Gastrocnemius medialis (tissue), 4 donors: ENCODE measurements at regions of chr10 and their contacts with region 1.

Region 1: GRCh38 chr10:63629363-63630084 is 108.3 kb downstream of the REEP3 start:
- DNase-seq: peak; percentile 92 to 94
- ATAC-seq: peak; percentile 88 to 92
- H3K4me3 ChIP-seq: peak overlapping the region; percentile 57 to 83 (median 69)
- H3K27ac ChIP-seq: peak overlapping the region; percentile 94 to 99 (median 97)
- H3K4me1 ChIP-seq: peaks cover 16 to 23% of the 10 kb centered on the region in 2 donors
- H3K27me3 ChIP-seq: no peaks in the 10 kb centered on the region
- CTCF ChIP-seq: peak; percentile 36 to 71 (median 62)
- POLR2A ChIP-seq: no peak

Region 2: DNA sequence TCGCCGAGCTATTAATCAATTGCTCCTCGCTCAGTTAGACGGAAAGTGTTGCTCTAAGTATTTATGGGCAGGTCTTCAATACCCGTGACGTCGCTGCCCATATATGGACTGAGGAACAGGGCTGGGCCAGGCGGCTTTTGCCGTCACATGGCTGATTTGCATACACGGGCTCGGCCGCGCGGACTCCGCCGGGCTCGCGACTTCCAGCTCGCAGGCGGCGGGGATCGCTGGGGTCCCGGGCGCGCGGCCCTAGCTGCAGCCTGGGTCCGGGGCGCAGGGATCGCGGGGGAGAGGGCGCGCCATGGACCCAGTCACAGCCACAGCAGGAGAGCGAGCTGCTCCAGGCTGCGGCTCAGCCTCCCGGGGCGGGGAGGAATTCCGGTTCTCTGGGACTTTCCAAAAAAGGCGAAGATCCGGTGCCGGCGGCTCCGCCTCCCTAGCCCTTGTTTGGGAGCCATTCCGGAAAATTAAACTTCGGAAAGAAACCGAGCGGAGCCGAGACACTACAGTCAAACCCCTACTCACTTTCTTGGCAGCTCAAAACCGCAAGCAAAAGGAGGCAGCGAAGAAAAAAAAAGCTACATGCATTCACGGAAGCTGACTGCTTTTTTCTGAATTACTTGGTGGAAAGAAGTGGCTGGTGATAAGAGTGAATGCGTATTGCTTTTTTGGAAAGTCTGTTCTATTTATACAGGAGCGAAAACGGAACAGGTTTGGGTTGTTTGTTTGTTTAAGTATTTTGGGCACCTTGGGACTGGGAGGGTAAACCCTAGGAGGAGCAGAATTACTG is 813.0 kb before region 1 on chr10 and contains the start of gene EGR2:
- in situ Hi-C with region 1: no loop called
- intact Hi-C with region 1: loop called (anchors 2 kb)
- DNase-seq: peak; percentile 86 to 89
- ATAC-seq: peak; percentile 88 to 89
- H3K4me3 ChIP-seq: peak within 1 kb of the TSS; percentile 76 to 99 (median 92)
- H3K27ac ChIP-seq: peak within 1 kb of the TSS; percentile 86 to 94 (median 87)
- H3K4me1 ChIP-seq: peaks cover 15 to 32% of the 10 kb centered on the region in 2 donors
- H3K27me3 ChIP-seq: peaks cover 24 to 25% (median 24%) of the 10 kb centered on the region in 3 donors
- CTCF ChIP-seq: no peak
- POLR2A ChIP-seq: peak in 1 of 2 donors; percentile 11
- total RNA-seq, gene EGR2: 0.40 to 1.5 (median 0.76) TPM in 3 of 4 donors, not detected in the other

Region 3: DNA sequence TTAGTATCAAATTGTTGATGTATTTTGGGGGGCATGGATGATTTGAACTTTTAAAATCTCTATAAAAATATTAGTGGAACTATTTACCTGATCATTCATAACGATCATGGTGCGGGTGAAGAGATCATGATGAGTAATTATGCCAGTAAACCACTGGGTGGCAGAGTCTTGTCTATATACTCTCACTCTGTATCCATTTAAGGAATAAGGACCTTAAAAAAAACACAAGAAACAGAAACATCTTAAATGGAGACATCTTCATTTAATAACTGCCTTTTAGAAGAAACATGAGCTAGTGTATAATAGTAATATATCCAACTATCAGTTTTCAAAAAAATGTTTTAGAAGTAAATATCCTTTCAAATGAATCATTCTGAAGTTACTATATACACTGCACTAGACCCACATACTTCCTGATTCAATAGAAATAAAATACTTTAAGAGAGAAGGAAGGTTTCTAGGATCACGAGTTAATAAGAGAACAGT is 412.4 kb before region 1 on chr10:
- in situ Hi-C with region 1: loop called in 3 of 4 experiments (anchors 5 to 10 kb)
- intact Hi-C with region 1: loop called (anchors 1 kb)
- DNase-seq: no peak
- ATAC-seq: peak; percentile 78 to 90
- H3K4me3 ChIP-seq: no peak overlapping the region
- H3K27ac ChIP-seq: peak overlapping the region in 3 of 4 donors; percentile 10 to 24 (median 23)
- H3K4me1 ChIP-seq: peaks cover 0 to 26% of the 10 kb centered on the region in 2 donors
- H3K27me3 ChIP-seq: no peaks in the 10 kb centered on the region
- CTCF ChIP-seq: peak; percentile 62 to 79 (median 67)
- POLR2A ChIP-seq: no peak

Region 4: GRCh38 chr10:63363951-63364350 is 265.6 kb before region 1 on chr10:
- in situ Hi-C with region 1: no loop called
- intact Hi-C with region 1: loop called (anchors 5 kb)
- DNase-seq: no peak
- ATAC-seq: no peak
- H3K4me3 ChIP-seq: no peak overlapping the region
- H3K27ac ChIP-seq: no peak overlapping the region
- H3K4me1 ChIP-seq: peaks cover 5 to 8% of the 10 kb centered on the region in 2 donors
- H3K27me3 ChIP-seq: no peaks in the 10 kb centered on the region
- CTCF ChIP-seq: no peak
- POLR2A ChIP-seq: no peak

Region 5: DNA sequence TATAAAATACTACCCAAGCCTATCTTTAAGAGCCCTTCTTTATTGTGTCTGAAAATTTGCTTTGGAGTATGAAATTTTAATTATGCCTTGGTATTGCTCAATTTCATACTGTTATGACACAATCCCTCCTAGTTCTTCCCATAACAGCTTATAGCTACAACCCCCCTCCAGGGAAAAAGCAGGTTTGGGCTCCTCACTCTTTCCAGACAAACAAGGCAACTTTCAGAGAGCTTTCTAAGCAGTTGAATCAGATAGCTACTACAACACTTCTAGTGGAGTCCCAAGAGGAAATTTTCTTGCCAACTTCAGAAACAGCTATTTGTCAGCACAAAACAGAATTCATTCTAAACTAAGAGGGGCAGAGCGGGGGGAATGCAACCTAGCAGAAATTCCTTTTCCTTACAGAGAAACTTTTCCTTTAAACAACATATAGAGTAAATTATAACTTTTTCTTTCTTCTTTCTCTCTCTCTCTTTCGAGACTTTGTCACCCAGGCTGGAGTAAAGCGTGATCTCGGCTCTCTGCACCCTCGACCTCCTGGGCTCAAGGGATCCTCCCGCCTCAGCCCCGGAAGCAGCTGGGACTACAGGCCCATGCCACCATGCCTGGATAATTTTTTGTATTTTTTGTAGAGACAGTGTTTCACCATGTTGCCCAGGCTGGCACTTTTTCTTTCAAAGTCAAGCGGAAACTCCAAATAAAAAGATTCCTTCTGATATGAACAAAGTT is 137.8 kb before region 1 on chr10:
- in situ Hi-C with region 1: no loop called
- intact Hi-C with region 1: no loop called
- DNase-seq: peak in 1 of 2 donors; percentile 29
- ATAC-seq: peak; percentile 61 to 85
- H3K4me3 ChIP-seq: peak overlapping the region in 1 of 4 donors; percentile 27
- H3K27ac ChIP-seq: peak overlapping the region; percentile 29 to 58 (median 48)
- H3K4me1 ChIP-seq: peaks cover 11 to 21% of the 10 kb centered on the region in 2 donors
- H3K27me3 ChIP-seq: no peaks in the 10 kb centered on the region
- CTCF ChIP-seq: no peak
- POLR2A ChIP-seq: no peak

Region 6: DNA sequence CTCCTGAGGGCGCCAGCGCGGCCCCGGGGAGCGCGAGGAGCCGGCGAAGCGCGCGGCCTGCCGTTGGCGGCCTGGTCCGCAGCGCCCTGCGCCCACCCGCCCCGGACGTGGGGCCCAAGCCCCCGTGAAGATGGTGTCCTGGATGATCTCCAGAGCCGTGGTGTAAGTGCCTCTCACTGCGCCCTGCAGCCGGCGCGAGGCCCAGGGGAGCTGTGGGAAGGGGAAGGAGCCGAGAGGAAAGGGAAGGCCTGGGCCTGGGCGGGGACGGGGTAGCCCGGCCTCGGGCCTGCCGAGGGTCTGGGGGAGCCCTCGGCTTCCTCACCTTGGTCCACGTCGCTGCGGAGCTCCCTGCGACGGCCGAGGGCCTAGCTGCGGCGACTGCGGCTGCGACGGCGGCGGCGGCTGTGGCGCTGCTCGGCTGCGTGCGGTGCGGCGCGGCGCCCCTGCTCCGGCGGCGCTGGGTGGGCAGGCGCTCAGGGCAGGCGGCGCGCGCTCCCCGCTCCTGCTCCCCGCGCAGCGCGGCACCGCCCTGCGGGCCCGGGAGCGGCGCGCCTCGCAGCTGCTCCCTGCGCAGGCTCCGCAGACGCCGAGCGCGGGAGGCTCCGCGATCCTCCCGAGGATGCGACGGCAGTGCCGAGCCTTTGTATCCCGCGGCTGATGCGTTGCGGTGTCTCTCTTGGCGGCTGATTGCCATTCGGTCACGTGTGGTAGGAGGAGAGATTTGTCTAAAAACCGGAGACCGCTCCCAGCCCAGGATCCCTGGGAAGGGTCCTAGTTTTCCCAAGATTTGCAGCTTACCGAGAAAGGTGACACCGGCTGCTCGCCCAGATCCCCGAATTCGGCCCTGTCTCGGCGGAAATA is 107.9 kb before region 1 on chr10:
- in situ Hi-C with region 1: no loop called
- intact Hi-C with region 1: loop called (anchors 2 kb)
- DNase-seq: peak; percentile 42 to 64
- ATAC-seq: peak; percentile 81 to 86
- H3K4me3 ChIP-seq: peak overlapping the region; percentile 73 to 88 (median 80)
- H3K27ac ChIP-seq: peak overlapping the region; percentile 95 to 98 (median 98)
- H3K4me1 ChIP-seq: peaks cover 51 to 52% of the 10 kb centered on the region in 2 donors
- H3K27me3 ChIP-seq: no peaks in the 10 kb centered on the region
- CTCF ChIP-seq: peak in 1 of 5 experiments; percentile 6
- POLR2A ChIP-seq: peak; percentile 77 to 81

Region 7: DNA sequence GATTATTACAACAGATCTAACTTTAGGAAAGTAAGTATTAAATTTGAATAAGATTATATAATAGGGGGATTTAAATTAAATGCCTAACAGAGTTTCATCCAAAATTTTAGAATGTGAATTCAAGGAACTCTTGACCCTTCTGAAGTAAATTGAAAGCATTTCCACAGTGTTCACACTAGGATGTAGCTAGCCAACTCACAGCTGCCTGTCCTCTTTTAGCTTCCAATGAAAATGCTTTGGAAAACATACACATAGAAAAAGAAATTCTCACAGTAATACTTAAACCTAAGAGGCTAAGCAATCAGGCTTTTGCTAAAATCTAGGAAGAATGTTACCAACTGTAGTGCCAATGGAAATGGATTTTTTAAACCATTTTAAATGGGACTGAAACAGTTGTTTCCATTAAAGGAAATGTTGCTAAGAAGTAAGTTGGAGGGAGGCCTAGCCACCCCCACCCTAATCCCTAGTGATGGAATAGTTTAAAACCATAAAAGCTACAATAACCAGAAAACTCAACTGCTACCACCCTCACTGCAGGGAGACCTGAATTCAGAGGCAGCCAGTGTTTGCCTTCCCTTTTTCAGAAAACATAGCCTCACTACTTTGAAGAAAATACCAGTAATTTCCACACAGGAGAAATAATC is 50.0 kb before region 1 on chr10:
- in situ Hi-C with region 1: no loop called
- intact Hi-C with region 1: no loop called
- DNase-seq: no peak
- ATAC-seq: no peak
- H3K4me3 ChIP-seq: no peak overlapping the region
- H3K27ac ChIP-seq: peak overlapping the region in 1 of 4 donors; percentile 27
- H3K4me1 ChIP-seq: peaks cover 30 to 59% of the 10 kb centered on the region in 2 donors
- H3K27me3 ChIP-seq: no peaks in the 10 kb centered on the region
- CTCF ChIP-seq: no peak
- POLR2A ChIP-seq: no peak

Region 8: GRCh38 chr10:63700209-63700613 is 70.7 kb after region 1 on chr10:
- in situ Hi-C with region 1: no loop called
- intact Hi-C with region 1: loop called (anchors 1 kb)
- DNase-seq: peak; percentile 79 to 82
- ATAC-seq: peak; percentile 97 to 98
- H3K4me3 ChIP-seq: no peak overlapping the region
- H3K27ac ChIP-seq: peak overlapping the region; percentile 81 to 91 (median 85)
- H3K4me1 ChIP-seq: peaks cover 45 to 60% of the 10 kb centered on the region in 2 donors
- H3K27me3 ChIP-seq: no peaks in the 10 kb centered on the region
- CTCF ChIP-seq: no peak
- POLR2A ChIP-seq: no peak

Region 9: DNA sequence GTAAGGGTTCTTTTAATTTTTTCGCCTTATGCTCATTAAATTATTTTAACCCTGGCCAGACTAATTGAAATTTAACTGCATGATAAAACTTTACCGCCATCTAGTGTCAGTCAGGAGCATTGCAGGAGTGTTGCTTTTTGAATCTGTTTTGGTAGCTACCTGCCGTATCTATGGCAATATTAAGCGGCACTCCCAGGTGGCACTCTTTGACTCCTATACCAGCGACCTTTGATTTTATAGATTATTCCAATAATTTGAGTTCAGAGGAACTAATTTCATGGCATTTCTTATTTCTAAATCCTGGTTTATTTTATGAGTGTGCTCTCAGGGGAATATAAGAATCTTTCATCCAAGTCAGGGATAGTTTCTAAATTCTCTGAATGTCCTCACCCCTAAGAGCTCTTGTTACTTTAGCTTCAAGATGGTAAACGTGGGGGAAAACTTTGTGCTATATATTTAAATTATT is 90.6 kb after region 1 on chr10:
- in situ Hi-C with region 1: loop called in 1 of 4 experiments (anchors 10 kb)
- intact Hi-C with region 1: loop called (anchors 1 kb)
- DNase-seq: no peak
- ATAC-seq: peak; percentile 27 to 32
- H3K4me3 ChIP-seq: peak overlapping the region in 1 of 4 donors; percentile 11
- H3K27ac ChIP-seq: peak overlapping the region in 3 of 4 donors; percentile 33 to 61 (median 37)
- H3K4me1 ChIP-seq: peaks cover 10 to 19% of the 10 kb centered on the region in 2 donors
- H3K27me3 ChIP-seq: no peaks in the 10 kb centered on the region
- CTCF ChIP-seq: peak; percentile 88 to 99 (median 94)
- POLR2A ChIP-seq: no peak

Region 10: GRCh38 chr10:63798599-63799498 is 169.3 kb after region 1 on chr10:
- in situ Hi-C with region 1: no loop called
- intact Hi-C with region 1: no loop called
- DNase-seq: peak; percentile 16 to 32
- ATAC-seq: peak; percentile 62 to 73
- H3K4me3 ChIP-seq: peak overlapping the region in 2 of 4 donors; percentile 3 to 16
- H3K27ac ChIP-seq: peak overlapping the region; percentile 24 to 60 (median 45)
- H3K4me1 ChIP-seq: peaks cover 0 to 4% of the 10 kb centered on the region in 2 donors
- H3K27me3 ChIP-seq: no peaks in the 10 kb centered on the region
- CTCF ChIP-seq: no peak
- POLR2A ChIP-seq: no peak